Caco-2 (cell line): ENCODE measurements at regions of chr11 and their contacts with region 1.

Region 1: GRCh38 chr11:70202898-70203748 is at the start of gene FADD:
- DNase-seq: peak; percentile 97 to 98
- H3K4me3 ChIP-seq: peak within 1 kb of the TSS; percentile 94
- H3K4me3 Mint-ChIP-seq: peak within 1 kb of the TSS; percentile 91
- H3K27ac Mint-ChIP-seq: peak within 1 kb of the TSS; percentile 79
- H3K4me1 ChIP-seq: peaks cover 17% of the 10 kb centered on the region
- H3K4me1 Mint-ChIP-seq: peaks cover 16% of the 10 kb centered on the region
- H3K27me3 ChIP-seq: no peaks in the 10 kb centered on the region
- H3K27me3 Mint-ChIP-seq: no peaks in the 10 kb centered on the region
- CTCF ChIP-seq: no peak
- total RNA-seq, gene FADD: 45.8 and 51.3 TPM in 2 replicates

Region 2: GRCh38 chr11:69962152-69962551 is 241.0 kb before region 1 on chr11:
- CTCF ChIA-PET with region 1: interaction called, 3 read pairs
- POLR2A ChIA-PET with region 1: interaction called, 11 read pairs
- intact Hi-C with region 1: no loop called
- DNase-seq: no peak
- H3K4me3 ChIP-seq: no peak overlapping the region
- H3K4me3 Mint-ChIP-seq: no peak overlapping the region
- H3K27ac Mint-ChIP-seq: no peak overlapping the region
- H3K4me1 ChIP-seq: peaks cover 20% of the 10 kb centered on the region
- H3K4me1 Mint-ChIP-seq: peaks cover 27% of the 10 kb centered on the region
- H3K27me3 ChIP-seq: no peaks in the 10 kb centered on the region
- H3K27me3 Mint-ChIP-seq: no peaks in the 10 kb centered on the region
- CTCF ChIP-seq: no peak

Region 3: DNA sequence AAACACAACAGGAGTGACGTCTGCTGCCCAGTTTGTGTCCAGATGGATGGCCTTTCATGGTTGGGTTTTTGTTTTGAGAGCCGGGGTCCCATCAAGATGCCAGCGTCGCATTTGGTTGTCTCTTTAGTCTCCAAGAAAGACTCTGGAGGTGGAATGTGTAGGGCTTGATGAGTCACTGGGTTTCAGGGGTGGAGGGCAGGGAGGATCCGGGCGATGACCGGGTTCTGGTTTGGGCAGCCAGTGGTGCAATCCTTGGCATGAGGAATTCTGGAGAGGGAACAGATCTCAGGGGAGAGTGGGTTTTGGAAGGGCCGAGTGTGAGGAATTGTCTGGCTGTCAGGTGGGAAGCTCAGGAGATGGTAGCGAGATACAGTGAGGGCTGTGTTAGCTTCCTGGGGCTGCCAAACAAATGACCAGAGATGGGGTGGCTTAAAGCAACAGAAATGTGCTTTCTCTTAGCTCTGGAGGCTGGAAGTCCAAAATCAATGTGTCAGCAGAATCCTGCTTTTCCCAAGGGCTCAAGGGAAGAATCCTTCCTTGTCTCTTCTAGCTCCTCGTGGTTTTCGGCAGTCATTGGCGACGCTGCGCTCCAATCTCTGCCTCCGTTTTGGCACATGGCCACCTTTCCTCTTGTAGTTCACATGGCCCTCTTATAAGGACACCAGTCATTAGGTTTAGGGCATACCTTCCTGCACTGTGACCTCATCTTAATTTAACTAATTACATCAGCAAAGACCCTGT is 41.0 kb after region 1 on chr11:
- CTCF ChIA-PET with region 1: no interaction called
- POLR2A ChIA-PET with region 1: no interaction called
- intact Hi-C with region 1: loop called (anchors 2 kb)
- DNase-seq: no peak
- H3K4me3 ChIP-seq: no peak overlapping the region
- H3K4me3 Mint-ChIP-seq: no peak overlapping the region
- H3K27ac Mint-ChIP-seq: peak overlapping the region; percentile 97
- H3K4me1 ChIP-seq: peaks cover 51% of the 10 kb centered on the region
- H3K4me1 Mint-ChIP-seq: peaks cover 30% of the 10 kb centered on the region
- H3K27me3 ChIP-seq: no peaks in the 10 kb centered on the region
- H3K27me3 Mint-ChIP-seq: no peaks in the 10 kb centered on the region
- CTCF ChIP-seq: no peak

Region 4: GRCh38 chr11:70378509-70379134 is 175.5 kb after region 1 on chr11:
- CTCF ChIA-PET with region 1: no interaction called
- POLR2A ChIA-PET with region 1: no interaction called
- intact Hi-C with region 1: no loop called
- DNase-seq: peak in 1 of 2 experiments; percentile 46
- H3K4me3 ChIP-seq: no peak overlapping the region
- H3K4me3 Mint-ChIP-seq: no peak overlapping the region
- H3K27ac Mint-ChIP-seq: peak overlapping the region; percentile 63
- H3K4me1 ChIP-seq: peaks cover under 1% of the 10 kb centered on the region; the same call in 1 of the 2 replicates
- H3K4me1 Mint-ChIP-seq: peaks cover 13% of the 10 kb centered on the region
- H3K27me3 ChIP-seq: no peaks in the 10 kb centered on the region
- H3K27me3 Mint-ChIP-seq: no peaks in the 10 kb centered on the region
- CTCF ChIP-seq: peak; percentile 10 to 31

Region 5: GRCh38 chr11:70410276-70411205 is 207.4 kb after region 1 on chr11:
- CTCF ChIA-PET with region 1: no interaction called
- POLR2A ChIA-PET with region 1: no interaction called
- intact Hi-C with region 1: no loop called
- DNase-seq: no peak
- H3K4me3 ChIP-seq: no peak overlapping the region
- H3K4me3 Mint-ChIP-seq: no peak overlapping the region
- H3K27ac Mint-ChIP-seq: no peak overlapping the region
- H3K4me1 ChIP-seq: no peaks in the 10 kb centered on the region
- H3K4me1 Mint-ChIP-seq: no peaks in the 10 kb centered on the region
- H3K27me3 ChIP-seq: no peaks in the 10 kb centered on the region
- H3K27me3 Mint-ChIP-seq: no peaks in the 10 kb centered on the region
- CTCF ChIP-seq: no peak